Endothelial cell of umbilical vein (primary cell): ENCODE measurements at regions of chr18 and their contacts with region 1.

Region 1: GRCh38 chr18:9951022-9951859 is 37.4 kb downstream of the VAPA start:
- DNase-seq: peak; percentile 75
- H3K4me3 ChIP-seq: no peak overlapping the region
- H3K27ac ChIP-seq: no peak overlapping the region
- H3K4me1 ChIP-seq: no peaks in the 10 kb centered on the region
- H3K27me3 ChIP-seq: no peaks in the 10 kb centered on the region
- CTCF ChIP-seq: peak; percentile 63 to 68
- POLR2A ChIP-seq: no peak

Region 2: GRCh38 chr18:9683407-9684396 is 267.5 kb before region 1 on chr18:
- CTCF ChIA-PET with region 1: interaction called, 17 read pairs
- POLR2A ChIA-PET with region 1: no interaction called
- dilution Hi-C with region 1: no loop called
- intact Hi-C with region 1: loop called (anchors 1 kb)
- DNase-seq: peak; percentile 68
- H3K4me3 ChIP-seq: no peak overlapping the region
- H3K27ac ChIP-seq: no peak overlapping the region
- H3K4me1 ChIP-seq: no peaks in the 10 kb centered on the region
- H3K27me3 ChIP-seq: no peaks in the 10 kb centered on the region
- CTCF ChIP-seq: peak; percentile 30 to 44
- POLR2A ChIP-seq: no peak